ENCODE measurements at regions of chr5 and their contacts with region 1.

Region 1: DNA sequence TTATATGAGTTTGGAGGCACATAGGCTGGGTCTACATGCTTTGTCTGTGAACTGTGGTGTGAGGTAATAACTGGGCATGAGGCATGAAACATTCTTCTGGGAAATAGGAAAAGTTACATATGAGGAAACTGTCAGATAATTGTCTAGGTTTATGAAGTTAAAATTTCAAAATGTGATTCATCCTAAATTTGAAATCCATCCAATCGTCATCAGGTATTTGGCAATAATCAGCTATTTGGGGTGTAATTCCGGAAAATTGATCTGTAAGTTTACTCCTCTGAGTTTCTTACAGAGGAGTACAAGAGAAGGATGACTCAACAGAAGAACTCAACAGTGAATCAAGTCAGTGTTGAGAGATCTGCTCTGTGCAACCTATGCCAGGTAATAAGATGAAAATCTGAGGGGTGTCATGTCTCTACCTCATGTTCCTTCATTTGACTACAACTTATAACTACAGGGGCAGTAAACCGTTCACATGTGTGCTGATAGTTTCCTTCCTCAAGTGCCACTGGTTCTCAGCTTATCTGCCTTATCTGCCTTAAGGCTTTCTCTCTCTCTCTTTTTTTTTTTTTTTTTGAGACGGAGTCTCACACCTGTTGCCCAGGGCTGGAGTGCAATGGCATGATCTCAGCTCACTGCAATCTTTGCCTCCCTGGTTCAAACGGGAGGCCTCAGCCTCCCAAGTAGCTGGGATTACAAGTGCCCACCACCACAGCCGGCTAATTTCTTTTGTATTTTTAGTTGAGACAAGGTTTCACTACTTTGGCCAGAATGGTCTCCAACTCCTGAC is 1171.7 kb upstream of the CDH18 start:
- DNase-seq: no peak
- ATAC-seq: no peak

Region 2: DNA sequence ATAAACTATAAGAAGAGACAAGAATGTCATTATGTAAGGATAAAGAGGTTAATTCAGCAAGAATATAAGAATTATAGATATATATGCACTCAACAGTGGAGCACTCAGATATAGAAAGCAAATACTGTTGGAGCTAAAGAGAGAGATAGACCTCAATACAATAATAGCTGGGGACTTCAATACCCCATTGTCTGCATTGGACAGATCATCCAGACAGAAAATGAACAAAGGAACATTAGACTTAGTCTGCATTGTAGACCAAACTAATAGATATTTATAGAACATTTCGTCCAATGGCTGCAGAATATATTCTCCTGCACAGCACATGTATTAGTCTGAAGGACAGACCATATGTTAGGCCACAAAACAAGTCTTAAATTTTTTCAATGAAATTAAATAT is 1948.8 kb before region 1 on chr5:
- intact Hi-C with region 1: loop called (anchors 10 kb)
- DNase-seq: no peak
- ATAC-seq: no peak